Calu3 (cell line): ENCODE measurements at regions of chr17 and their contacts with region 1.

Region 1: GRCh38 chr17:43846221-43846712 is 709 bp upstream of the CD300LG start:
- DNase-seq: peak; percentile 97
- H3K4me3 Mint-ChIP-seq: no peak overlapping the region
- H3K27ac Mint-ChIP-seq: no peak overlapping the region
- H3K4me1 Mint-ChIP-seq: peaks cover 26% of the 10 kb centered on the region
- H3K27me3 Mint-ChIP-seq: peaks cover 44% of the 10 kb centered on the region
- CTCF ChIP-seq: peak; percentile 99

Region 2: GRCh38 chr17:42704837-42705494 is 1141.3 kb before region 1 on chr17:
- CTCF ChIA-PET with region 1: no interaction called
- intact Hi-C with region 1: no loop called
- DNase-seq: no peak
- H3K4me3 Mint-ChIP-seq: no peak overlapping the region
- H3K27ac Mint-ChIP-seq: no peak overlapping the region
- H3K4me1 Mint-ChIP-seq: no peaks in the 10 kb centered on the region
- H3K27me3 Mint-ChIP-seq: no peaks in the 10 kb centered on the region
- CTCF ChIP-seq: no peak

Region 3: DNA sequence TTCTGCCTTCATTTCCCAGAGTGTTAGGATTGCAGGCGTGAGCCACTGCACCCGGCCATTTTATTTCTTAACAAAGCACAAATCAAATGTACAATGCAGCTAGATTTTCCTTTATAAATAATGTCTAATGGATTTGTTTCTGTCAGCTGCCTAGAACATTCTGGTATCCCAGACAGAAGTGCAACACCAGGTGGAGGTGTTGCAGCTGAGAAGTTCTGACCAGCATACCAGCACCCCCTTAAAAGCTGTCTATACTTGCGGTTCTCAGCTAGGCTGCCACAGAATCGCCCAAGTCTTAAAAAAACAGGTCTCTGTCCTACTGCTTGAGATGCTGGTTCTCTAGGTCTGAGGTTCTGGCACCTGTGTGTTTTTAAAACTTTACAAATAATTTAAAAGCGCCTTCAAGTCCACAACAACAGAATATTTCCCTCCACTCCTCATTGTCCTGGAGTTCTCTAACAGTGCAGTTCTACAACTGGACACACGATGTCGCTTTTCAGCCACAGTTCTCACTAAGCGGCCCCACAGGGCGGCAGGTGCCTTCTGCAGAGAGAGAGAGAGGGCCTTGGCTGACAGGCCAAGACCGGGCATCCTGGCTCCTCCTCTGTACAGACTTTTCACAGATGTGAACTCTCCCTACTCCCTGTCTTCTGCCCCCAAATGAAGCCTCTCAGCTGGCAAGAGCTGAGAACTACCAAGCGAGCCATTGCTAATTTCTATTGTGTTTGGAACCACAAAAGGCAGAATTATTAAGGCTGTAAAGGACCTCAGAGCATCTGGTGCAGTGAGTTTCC is 152.0 kb before region 1 on chr17:
- CTCF ChIA-PET with region 1: interaction called, 8 read pairs
- intact Hi-C with region 1: loop called (anchors 5 kb)
- DNase-seq: peak; percentile 86
- H3K4me3 Mint-ChIP-seq: no peak overlapping the region
- H3K27ac Mint-ChIP-seq: no peak overlapping the region
- H3K4me1 Mint-ChIP-seq: no peaks in the 10 kb centered on the region
- H3K27me3 Mint-ChIP-seq: peaks cover 51% of the 10 kb centered on the region
- CTCF ChIP-seq: peak; percentile 97

Region 4: DNA sequence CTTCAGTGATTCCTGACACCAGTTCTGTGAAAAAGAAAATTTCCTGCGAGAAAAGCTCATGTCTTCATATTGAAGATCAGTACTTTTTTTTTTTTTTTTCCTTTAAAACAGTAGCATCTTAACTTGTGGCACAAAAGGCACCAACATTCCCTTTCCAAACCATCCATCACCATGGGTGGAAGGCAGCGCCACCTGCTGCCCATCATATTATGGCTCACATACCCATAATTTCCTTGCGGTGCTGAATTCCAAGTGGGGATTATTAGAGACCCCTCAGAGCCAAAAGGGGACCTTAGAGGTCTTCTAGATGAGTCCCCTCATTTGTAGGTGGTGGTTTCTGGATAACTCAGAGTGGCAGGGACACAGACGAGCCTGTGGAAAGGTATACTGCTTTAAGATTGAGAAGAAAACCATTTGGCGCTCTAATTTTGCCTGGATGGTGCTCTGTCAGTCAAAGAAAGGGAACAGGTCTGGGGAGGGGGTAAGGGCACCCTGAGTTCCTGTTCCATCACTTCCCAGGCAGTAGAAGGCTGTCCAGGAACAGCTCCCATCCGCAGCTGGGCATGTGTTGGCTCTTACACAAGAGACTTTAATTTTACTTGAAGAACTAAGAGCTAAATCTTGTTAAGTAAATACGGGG is 79.7 kb before region 1 on chr17:
- CTCF ChIA-PET with region 1: interaction called, 12 read pairs
- intact Hi-C with region 1: no loop called
- DNase-seq: peak; percentile 56
- H3K4me3 Mint-ChIP-seq: no peak overlapping the region
- H3K27ac Mint-ChIP-seq: no peak overlapping the region
- H3K4me1 Mint-ChIP-seq: no peaks in the 10 kb centered on the region
- H3K27me3 Mint-ChIP-seq: no peaks in the 10 kb centered on the region
- CTCF ChIP-seq: peak; percentile 83

Region 5: GRCh38 chr17:43784628-43785101 is 61.6 kb before region 1 on chr17:
- CTCF ChIA-PET with region 1: interaction called, 10 read pairs
- intact Hi-C with region 1: loop called (anchors 5 kb)
- DNase-seq: no peak
- H3K4me3 Mint-ChIP-seq: no peak overlapping the region
- H3K27ac Mint-ChIP-seq: no peak overlapping the region
- H3K4me1 Mint-ChIP-seq: no peaks in the 10 kb centered on the region
- H3K27me3 Mint-ChIP-seq: peaks cover 59% of the 10 kb centered on the region
- CTCF ChIP-seq: no peak

Region 6: GRCh38 chr17:43791589-43791988 is 54.7 kb before region 1 on chr17:
- CTCF ChIA-PET with region 1: interaction called, 10 read pairs
- intact Hi-C with region 1: loop called (anchors 5 kb)
- DNase-seq: peak; percentile 40
- H3K4me3 Mint-ChIP-seq: no peak overlapping the region
- H3K27ac Mint-ChIP-seq: no peak overlapping the region
- H3K4me1 Mint-ChIP-seq: peaks cover 12% of the 10 kb centered on the region
- H3K27me3 Mint-ChIP-seq: peaks cover 30% of the 10 kb centered on the region
- CTCF ChIP-seq: no peak